Left cardiac atrium (tissue), 4 donors: ENCODE measurements at regions of chr15 and their contacts with region 1.

Region 1: GRCh38 chr15:39495871-39496840 is 84.7 kb upstream of the THBS1 start:
- DNase-seq: no peak
- ATAC-seq: no peak

Region 2: GRCh38 chr15:39195988-39196486 is 300.1 kb before region 1 on chr15:
- intact Hi-C with region 1: loop called in 1 of 2 experiments (anchors 10 kb)
- DNase-seq: no peak
- ATAC-seq: no peak

Region 3: DNA sequence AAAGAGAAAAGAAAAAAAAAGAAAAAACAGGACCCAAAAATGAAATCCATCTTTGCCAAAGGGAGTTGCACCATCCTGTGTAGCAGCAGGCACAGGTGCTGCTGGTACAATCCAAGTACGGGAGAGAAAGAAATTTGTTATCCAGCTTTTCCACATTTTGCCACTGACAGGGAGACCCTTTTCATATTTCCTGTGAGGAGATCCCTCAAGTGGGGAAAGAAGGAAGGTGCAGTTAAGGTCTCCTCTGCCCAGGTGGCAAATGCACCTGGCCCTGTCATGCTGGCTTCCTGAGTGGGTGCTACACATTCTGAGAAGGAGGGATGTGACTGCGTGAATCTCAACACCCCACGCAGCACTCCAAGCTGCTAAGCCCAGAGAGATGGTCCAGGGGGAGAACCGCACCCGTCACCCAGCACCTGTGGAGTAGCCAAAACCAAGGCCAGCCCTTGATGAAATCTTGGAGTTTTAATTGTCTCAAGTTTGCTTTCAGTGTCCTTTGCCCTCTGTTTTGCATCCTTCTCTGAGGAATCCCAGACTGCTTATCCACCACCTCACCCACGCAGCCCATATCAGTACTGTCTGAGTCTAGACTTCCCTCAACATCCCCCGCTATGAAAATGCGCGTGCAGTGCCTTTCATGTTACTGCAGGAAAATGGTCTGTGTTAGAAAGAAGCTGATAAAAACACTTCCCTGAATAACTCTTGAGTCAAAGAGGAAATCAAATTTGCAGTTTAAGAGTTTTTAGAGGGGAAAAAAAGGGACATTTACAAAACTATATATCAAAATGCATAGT is 57.2 kb before region 1 on chr15:
- intact Hi-C with region 1: loop called in 1 of 2 experiments (anchors 2 kb)
- DNase-seq: no peak
- ATAC-seq: peak; percentile 28 to 77

Region 4: GRCh38 chr15:39587910-39588530 is 91.9 kb after region 1 on chr15:
- intact Hi-C with region 1: no loop called
- DNase-seq: no peak
- ATAC-seq: no peak